B cell (primary cell): ENCODE measurements at regions of chr4 and their contacts with region 1.

Region 1: DNA sequence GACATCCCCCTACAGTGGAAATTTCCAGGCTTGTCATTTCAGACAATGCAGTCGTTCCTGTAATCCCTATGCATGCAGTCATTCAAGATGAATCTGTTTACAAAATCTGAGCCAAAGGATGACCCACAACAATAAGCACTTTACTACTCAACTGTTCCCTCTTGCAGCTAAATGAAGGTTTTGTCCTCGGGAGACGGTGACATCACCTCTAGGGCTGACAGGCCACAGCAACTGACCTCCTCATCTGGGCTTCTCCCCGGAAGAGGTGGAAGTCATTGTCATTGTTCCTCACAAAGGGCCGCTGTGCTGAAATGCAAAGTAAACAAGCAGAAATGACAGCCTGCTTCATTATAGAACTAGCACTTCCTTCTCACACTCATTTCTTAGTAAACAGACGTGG is 29.2 kb downstream of the CLRN2 start:
- DNase-seq: no peak
- ATAC-seq: no peak
- H3K4me3 ChIP-seq: no peak overlapping the region
- H3K4me3 Mint-ChIP-seq: no peak overlapping the region
- H3K27ac ChIP-seq: no peak overlapping the region
- H3K27ac Mint-ChIP-seq: no peak overlapping the region
- H3K4me1 ChIP-seq: no peaks in the 10 kb centered on the region
- H3K4me1 Mint-ChIP-seq: no peaks in the 10 kb centered on the region
- H3K27me3 ChIP-seq: peaks cover 0 to 2% (median 0%) of the 10 kb centered on the region in 4 experiments
- H3K27me3 Mint-ChIP-seq: peaks cover 22% of the 10 kb centered on the region
- CTCF ChIP-seq: no peak

Region 2: GRCh38 chr4:17614416-17615299 is 70.5 kb after region 1 on chr4 and contains the start of gene MED28:
- CTCF ChIA-PET with region 1: interaction called, 19 read pairs
- POLR2A ChIA-PET with region 1: no interaction called
- intact Hi-C with region 1: loop called (anchors 1 kb)
- DNase-seq: peak; percentile 96
- ATAC-seq: peak; percentile 91
- H3K4me3 ChIP-seq: peak within 1 kb of the TSS; percentile 73 to 100 (median 97)
- H3K4me3 Mint-ChIP-seq: peak within 1 kb of the TSS; percentile 100
- H3K27ac ChIP-seq: peak within 1 kb of the TSS; percentile 79 to 94
- H3K27ac Mint-ChIP-seq: peak within 1 kb of the TSS; percentile 91
- H3K4me1 ChIP-seq: peaks cover 16 to 35% of the 10 kb centered on the region in 2 donors
- H3K4me1 Mint-ChIP-seq: peaks cover 44% of the 10 kb centered on the region
- H3K27me3 ChIP-seq: no peaks in the 10 kb centered on the region
- H3K27me3 Mint-ChIP-seq: no peaks in the 10 kb centered on the region
- CTCF ChIP-seq: no peak
- total RNA-seq, gene MED28: 81.5 and 83.8 TPM in 2 replicates

Region 3: GRCh38 chr4:17810260-17811077 is 266.3 kb after region 1 on chr4 and contains the starts of genes DCAF16 and NCAPG:
- CTCF ChIA-PET with region 1: interaction called, 53 read pairs
- POLR2A ChIA-PET with region 1: no interaction called
- intact Hi-C with region 1: loop called (anchors 1 kb)
- DNase-seq: peak; percentile 100
- ATAC-seq: peak; percentile 94
- H3K4me3 ChIP-seq: peak within 1 kb of the TSS; percentile 81 to 91 (median 86)
- H3K4me3 Mint-ChIP-seq: peak within 1 kb of the TSS; percentile 97
- H3K27ac ChIP-seq: peak within 1 kb of the TSS; percentile 94 to 99
- H3K27ac Mint-ChIP-seq: peak within 1 kb of the TSS; percentile 100
- H3K4me1 ChIP-seq: peaks cover 32 to 37% of the 10 kb centered on the region in 2 donors
- H3K4me1 Mint-ChIP-seq: peaks cover 54% of the 10 kb centered on the region
- H3K27me3 ChIP-seq: no peaks in the 10 kb centered on the region
- H3K27me3 Mint-ChIP-seq: no peaks in the 10 kb centered on the region
- CTCF ChIP-seq: no peak
- total RNA-seq, gene DCAF16: 68.1 and 69.9 TPM in 2 replicates
- total RNA-seq, gene NCAPG: 0.44 and 0.84 TPM in 2 replicates

Region 4: DNA sequence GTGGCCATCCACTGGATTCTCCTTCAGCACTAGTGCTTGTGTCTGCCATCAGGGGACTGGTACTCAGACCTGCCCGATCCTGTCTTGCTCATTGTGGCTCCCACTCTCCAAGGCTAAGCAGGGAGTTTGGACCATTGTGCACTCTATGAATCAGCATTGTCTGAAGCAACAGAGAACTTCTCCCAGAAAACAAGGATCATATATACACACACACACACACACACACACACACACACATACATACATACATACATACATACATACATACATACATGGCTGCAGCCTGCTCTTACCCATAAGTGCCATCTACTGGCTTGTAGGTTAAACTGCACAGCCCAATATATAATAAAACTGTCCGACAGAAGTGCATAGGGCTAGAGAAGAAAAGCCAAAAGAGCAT is 822.7 kb after region 1 on chr4:
- CTCF ChIA-PET with region 1: no interaction called
- POLR2A ChIA-PET with region 1: no interaction called
- intact Hi-C with region 1: loop called (anchors 5 kb)
- DNase-seq: peak; percentile 31
- ATAC-seq: peak; percentile 41
- H3K4me3 ChIP-seq: no peak overlapping the region
- H3K4me3 Mint-ChIP-seq: no peak overlapping the region
- H3K27ac ChIP-seq: no peak overlapping the region
- H3K27ac Mint-ChIP-seq: no peak overlapping the region
- H3K4me1 ChIP-seq: no peaks in the 10 kb centered on the region
- H3K4me1 Mint-ChIP-seq: no peaks in the 10 kb centered on the region
- H3K27me3 ChIP-seq: no peaks in the 10 kb centered on the region
- H3K27me3 Mint-ChIP-seq: no peaks in the 10 kb centered on the region
- CTCF ChIP-seq: no peak